Transverse colon (tissue), 4 donors: ENCODE measurements at regions of chr7 and their contacts with region 1.

Region 1: GRCh38 chr7:114901781-114902180 is 20.1 kb upstream of the MDFIC start:
- DNase-seq: no peak
- H3K4me3 ChIP-seq: no peak overlapping the region
- H3K27ac ChIP-seq: no peak overlapping the region
- H3K4me1 ChIP-seq: no peaks in the 10 kb centered on the region
- H3K27me3 ChIP-seq: no peaks in the 10 kb centered on the region
- CTCF ChIP-seq: no peak
- EP300 ChIP-seq: no peak
- POLR2A ChIP-seq: no peak

Region 2: GRCh38 chr7:115748131-115748738 is 846.5 kb after region 1 on chr7:
- in situ Hi-C with region 1: no loop called
- intact Hi-C with region 1: loop called (anchors 5 kb)
- DNase-seq: no peak
- H3K4me3 ChIP-seq: no peak overlapping the region
- H3K27ac ChIP-seq: no peak overlapping the region
- H3K4me1 ChIP-seq: peaks cover 0 to 9% (median 4%) of the 10 kb centered on the region in 4 donors
- H3K27me3 ChIP-seq: no peaks in the 10 kb centered on the region
- CTCF ChIP-seq: peak; percentile 16 to 32 (median 28)
- EP300 ChIP-seq: no peak
- POLR2A ChIP-seq: no peak